Heart left ventricle (tissue), 16 donors: ENCODE measurements at regions of chr2 and their contacts with region 1.

Region 1: GRCh38 chr2:38728694-38729093 is 22.5 kb downstream of the SRSF7 start:
- DNase-seq: no peak
- ATAC-seq: no peak
- H3K4me3 ChIP-seq: no peak overlapping the region
- H3K27ac ChIP-seq: no peak overlapping the region
- H3K4me1 ChIP-seq: peaks cover 0 to 13% (median 0%) of the 10 kb centered on the region in 12 donors
- H3K27me3 ChIP-seq: no peaks in the 10 kb centered on the region
- CTCF ChIP-seq: no peak
- POLR2A ChIP-seq: no peak

Region 2: DNA sequence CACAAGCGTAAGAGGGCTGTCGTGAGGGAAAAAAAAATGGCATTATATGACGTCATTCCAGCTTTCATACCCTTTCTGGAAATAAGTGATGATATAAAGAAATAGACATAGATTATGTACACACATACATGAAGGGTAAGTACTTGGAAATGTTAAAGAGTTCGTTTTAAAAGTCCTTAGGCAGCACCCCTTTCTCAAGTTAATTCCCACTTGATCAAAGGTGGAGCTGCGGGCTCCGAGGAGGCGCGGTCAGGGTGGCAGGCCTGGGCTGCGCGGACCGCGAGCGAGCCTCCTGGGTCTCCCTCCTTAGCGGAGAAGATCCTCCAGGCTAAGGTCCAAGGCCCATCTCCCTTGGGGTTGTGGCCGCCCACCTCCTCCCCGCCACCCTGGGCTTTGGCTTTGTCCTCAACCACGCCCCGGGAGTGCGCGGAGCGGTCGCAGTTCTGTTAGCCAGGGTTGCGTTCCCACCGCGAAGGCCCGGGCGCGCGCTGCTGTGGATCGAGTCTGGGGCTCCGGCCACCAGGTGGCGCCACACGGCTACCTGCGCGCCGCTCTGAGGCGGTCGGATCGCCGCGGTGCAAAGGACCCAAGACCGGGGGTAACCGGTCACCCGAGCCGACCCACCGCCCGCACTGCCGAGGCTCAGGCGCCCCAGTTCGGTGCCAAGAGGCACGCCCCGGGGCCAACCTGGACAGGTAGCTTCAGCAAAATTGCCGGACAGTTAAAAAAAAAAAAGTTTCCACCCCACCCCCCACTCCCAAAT is 192.8 kb before region 1 on chr2:
- intact Hi-C with region 1: loop called in 2 of 10 experiments (anchors 5 kb)
- DNase-seq: peak; percentile 78 to 93 (median 84)
- ATAC-seq: peak; percentile 91 to 96 (median 94)
- H3K4me3 ChIP-seq: peak overlapping the region in 11 of 12 donors; percentile 28 to 67 (median 51)
- H3K27ac ChIP-seq: peak overlapping the region in 1 of 12 donors; percentile 84
- H3K4me1 ChIP-seq: peaks cover 0 to 11% (median 0%) of the 10 kb centered on the region in 12 donors
- H3K27me3 ChIP-seq: no peaks in the 10 kb centered on the region
- CTCF ChIP-seq: peak; percentile 82 to 97 (median 92)
- POLR2A ChIP-seq: no peak

Region 3: DNA sequence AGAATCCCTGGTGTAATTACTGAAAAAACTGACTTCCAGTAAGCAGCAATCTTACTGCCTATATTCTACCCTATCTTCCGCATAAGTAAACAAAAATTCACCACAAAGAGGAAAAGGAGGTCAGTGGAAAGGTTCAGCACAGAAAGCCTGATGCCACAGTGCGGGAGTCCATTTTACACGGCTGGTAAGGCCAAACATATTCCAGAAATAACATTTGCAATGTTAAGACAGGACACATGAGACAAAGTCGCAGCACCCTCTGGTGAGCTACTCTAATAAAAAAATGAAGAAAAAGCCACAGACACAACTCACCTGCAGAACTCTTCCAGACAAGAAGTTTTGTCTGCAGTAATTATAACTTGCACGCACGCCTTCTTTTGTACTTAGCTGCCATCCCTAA is 89.9 kb after region 1 on chr2:
- intact Hi-C with region 1: no loop called
- DNase-seq: no peak
- ATAC-seq: no peak
- H3K4me3 ChIP-seq: no peak overlapping the region
- H3K27ac ChIP-seq: no peak overlapping the region
- H3K4me1 ChIP-seq: no peaks in the 10 kb centered on the region
- H3K27me3 ChIP-seq: no peaks in the 10 kb centered on the region
- CTCF ChIP-seq: no peak
- POLR2A ChIP-seq: no peak